Esophagus muscularis mucosa (tissue), 4 donors: ENCODE measurements at regions of chr20 and their contacts with region 1.

Region 1: GRCh38 chr20:32521780-32522525 is 63.2 kb downstream of the NOL4L start:
- DNase-seq: no peak
- H3K4me3 ChIP-seq: no peak overlapping the region
- H3K27ac ChIP-seq: no peak overlapping the region
- H3K4me1 ChIP-seq: peaks cover 21 to 39% (median 33%) of the 10 kb centered on the region in 4 donors
- H3K27me3 ChIP-seq: no peaks in the 10 kb centered on the region
- CTCF ChIP-seq: peak; percentile 77 to 88 (median 83)
- EP300 ChIP-seq: no peak
- POLR2A ChIP-seq: no peak

Region 2: DNA sequence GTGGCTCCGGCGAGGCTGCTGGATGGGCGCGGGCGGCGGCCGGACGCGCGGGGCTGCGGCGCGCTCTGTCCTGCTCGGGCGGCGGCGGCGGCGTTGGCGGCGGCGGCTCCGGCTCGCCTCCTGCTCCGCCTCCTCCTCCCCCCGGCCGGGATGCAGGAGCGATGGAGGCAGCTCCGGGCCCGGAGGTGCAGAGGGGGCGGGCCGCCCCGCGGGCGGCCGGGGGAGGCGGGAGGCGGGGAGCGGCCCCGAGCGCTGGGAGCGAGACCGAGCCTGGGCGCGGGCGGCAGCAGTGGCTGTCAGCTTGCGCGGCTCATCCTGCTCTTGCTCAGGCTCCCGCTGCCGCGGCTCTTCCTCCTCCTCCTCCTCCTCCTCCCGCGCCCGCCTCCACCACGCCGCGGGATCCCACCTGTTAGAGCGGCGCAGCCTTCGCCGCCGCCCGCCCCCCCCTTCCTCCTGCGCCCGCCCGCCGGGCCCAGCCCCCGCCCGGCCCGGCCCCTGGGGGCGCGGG is 63.1 kb after region 1 on chr20 and contains the start of gene NOL4L:
- intact Hi-C with region 1: loop called (anchors 10 kb)
- DNase-seq: no peak
- H3K4me3 ChIP-seq: peak within 1 kb of the TSS; percentile 73 to 85 (median 74)
- H3K27ac ChIP-seq: peak within 1 kb of the TSS; percentile 37 to 69 (median 59)
- H3K4me1 ChIP-seq: peaks cover 4 to 37% (median 30%) of the 10 kb centered on the region in 4 donors
- H3K27me3 ChIP-seq: peaks cover 0 to 12% (median 0%) of the 10 kb centered on the region in 4 donors
- CTCF ChIP-seq: no peak
- EP300 ChIP-seq: no peak
- POLR2A ChIP-seq: no peak
- total RNA-seq, gene NOL4L: 5.8 to 19.4 (median 12.8) TPM

Region 3: DNA sequence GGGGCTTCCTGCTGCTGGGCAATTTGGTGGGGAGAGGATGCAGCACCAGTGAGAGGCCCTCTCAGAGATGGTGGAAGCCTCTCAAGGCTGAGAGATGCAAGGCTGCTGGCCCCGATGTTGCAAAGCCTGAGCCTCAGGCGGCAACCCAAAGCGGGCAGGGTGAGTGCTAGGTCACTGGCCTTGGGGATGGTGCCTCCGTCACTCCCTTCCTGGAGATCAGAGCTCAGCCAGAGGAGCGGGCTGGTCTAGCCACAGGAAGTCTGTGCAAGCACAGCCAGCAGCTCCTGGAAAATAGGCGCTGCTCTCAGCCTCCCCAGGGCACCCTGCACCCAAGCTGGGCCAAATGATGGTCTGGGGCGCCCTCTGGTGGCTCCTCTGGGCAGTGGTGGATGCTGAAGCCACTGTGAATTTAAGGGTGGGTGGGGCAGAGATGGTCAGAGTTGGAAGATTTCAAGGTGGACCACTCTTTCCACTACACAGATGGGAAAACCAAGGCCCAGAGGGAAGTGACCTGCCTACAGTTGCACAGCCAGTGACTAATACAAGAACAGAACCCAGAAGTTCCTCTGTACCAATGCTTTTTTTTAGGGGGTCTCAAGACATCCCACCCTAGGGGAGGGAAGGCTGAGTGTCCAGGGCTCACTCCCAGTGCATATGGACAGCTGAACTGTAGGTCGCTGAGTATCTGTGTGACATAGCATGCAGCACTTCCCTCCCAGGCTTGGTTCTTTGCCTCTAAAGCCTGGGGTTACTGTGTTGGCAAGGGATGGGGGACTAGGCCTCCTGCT is 131.0 kb after region 1 on chr20:
- intact Hi-C with region 1: loop called (anchors 1 kb)
- DNase-seq: peak; percentile 95
- H3K4me3 ChIP-seq: no peak overlapping the region
- H3K27ac ChIP-seq: no peak overlapping the region
- H3K4me1 ChIP-seq: peaks cover 4 to 6% (median 5%) of the 10 kb centered on the region in 4 donors
- H3K27me3 ChIP-seq: peaks cover 0 to under 1% (median 0%) of the 10 kb centered on the region in 4 donors
- CTCF ChIP-seq: peak; percentile 95 to 96 (median 95)
- EP300 ChIP-seq: no peak
- POLR2A ChIP-seq: no peak